GM18951 (cell line): ENCODE measurements at regions of chr7 and their contacts with region 1.

Region 1: DNA sequence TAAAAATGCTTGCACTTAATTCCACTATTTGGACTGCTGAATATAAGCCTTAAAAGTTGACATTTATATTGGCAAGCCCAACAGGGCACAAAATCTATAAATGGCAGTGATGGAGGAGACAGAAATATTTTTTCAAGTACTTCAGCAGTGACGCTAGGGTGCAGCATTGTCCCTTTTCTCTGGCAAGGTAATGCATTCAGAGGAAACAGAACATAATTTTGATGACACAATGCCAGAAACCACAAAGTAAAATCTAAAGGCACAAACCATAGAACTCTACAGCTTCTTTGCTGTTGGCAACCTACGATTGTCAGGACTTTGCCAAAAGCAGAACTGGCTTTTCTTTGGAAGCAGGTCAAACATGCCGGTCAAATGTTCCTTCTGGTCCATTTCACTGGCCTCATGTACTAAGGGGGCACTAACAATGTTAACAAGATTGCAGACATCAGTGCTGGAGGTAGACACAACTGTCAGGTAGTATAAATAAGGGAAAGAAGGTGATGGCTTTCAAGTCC is 30.9 kb upstream of the FAM133B start:
- POLR2A ChIP-seq: no peak

Region 2: DNA sequence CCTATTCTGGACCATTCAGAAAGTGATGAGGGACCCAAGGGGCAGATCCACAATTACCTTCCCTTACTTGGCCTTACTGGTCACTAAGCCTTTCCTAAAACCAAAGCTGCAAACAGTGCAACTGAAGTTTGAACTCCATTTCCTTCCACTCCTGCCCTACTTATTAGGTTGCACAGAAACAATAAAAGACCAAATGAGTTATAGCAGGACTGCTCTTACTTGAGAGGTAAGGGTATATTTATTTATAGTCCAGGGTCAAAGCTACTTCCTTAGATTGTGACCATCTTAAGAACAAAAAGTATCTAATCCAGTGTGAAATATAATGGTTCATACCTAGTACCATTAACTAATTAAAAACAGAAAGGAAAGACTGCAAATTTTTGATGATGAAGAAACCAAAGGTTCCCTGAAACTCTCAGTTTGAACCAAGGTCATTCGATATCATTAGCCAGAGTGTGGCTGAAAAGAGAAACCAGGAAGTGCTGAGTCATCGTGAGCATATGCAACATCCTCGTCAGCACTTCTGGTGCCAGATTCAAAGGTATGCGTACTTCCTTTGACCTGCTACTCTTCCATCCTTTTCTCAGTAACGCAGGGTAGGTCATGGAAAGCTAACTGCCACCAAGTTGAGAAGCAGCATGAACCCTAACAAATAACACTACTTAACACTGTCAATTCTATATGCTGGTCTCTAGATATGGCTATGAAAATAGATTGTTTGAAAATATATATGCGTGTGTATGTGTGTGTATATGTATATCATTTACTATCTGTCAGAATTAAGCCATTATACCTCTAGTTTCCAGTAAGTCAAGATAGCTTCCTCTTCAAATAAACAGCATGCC is 188.5 kb after region 1 on chr7:
- in situ Hi-C with region 1: loop called (anchors 10 kb)
- POLR2A ChIP-seq: peak; percentile 38